Endothelial cell of umbilical vein (primary cell): ENCODE measurements at regions of chr16 and their contacts with region 1.

Region 1: GRCh38 chr16:24988593-24989338 is 26.4 kb downstream of the ARHGAP17 start:
- DNase-seq: peak; percentile 92
- H3K4me3 ChIP-seq: peak overlapping the region in 1 of 3 experiments; percentile 60
- H3K27ac ChIP-seq: peak overlapping the region; percentile 99
- H3K4me1 ChIP-seq: peaks cover 88% of the 10 kb centered on the region
- H3K27me3 ChIP-seq: no peaks in the 10 kb centered on the region
- CTCF ChIP-seq: no peak
- POLR2A ChIP-seq: no peak

Region 2: DNA sequence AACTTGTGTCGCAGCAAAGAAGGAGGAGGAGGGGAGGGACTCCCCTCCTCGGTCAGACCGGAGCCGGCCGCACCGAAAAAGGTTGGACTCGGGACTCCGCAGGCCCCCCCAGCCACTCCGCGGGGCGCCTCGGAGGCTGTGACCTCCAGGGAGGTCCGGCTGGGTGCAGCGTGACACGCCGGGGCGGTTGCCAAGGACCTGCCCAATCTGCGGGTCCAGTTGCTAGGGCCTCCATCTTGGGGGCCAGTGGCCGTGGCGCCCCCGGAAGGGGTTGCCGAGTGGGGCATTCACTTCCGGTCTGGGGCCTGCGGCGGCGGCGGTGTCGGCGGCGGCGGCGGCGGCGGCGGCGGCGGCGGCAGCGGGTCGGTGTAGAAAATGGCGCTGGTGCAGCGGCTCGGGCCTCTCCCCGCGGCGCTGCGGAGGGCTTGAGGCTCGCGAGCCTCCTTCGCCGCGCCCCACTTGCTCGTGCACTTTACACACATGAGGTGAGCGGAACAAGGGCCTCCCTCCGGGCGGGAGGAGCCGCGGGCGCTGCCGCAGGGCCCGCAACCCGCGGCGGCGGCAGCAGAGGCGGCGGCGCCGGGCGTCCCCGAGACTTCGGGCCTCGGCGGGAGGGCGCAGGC is 259.3 kb before region 1 on chr16 and contains the start of gene TNRC6A:
- CTCF ChIA-PET with region 1: no interaction called
- POLR2A ChIA-PET with region 1: no interaction called
- dilution Hi-C with region 1: no loop called
- intact Hi-C with region 1: loop called (anchors 10 kb)
- DNase-seq: peak; percentile 88
- H3K4me3 ChIP-seq: peak within 1 kb of the TSS; percentile 89 to 98 (median 96)
- H3K27ac ChIP-seq: peak within 1 kb of the TSS; percentile 82
- H3K4me1 ChIP-seq: peaks cover 22% of the 10 kb centered on the region
- H3K27me3 ChIP-seq: no peaks in the 10 kb centered on the region
- CTCF ChIP-seq: no peak
- POLR2A ChIP-seq: peak; percentile 69
- total RNA-seq, gene TNRC6A: 62.7 and 74.5 TPM in 2 replicates

Region 3: DNA sequence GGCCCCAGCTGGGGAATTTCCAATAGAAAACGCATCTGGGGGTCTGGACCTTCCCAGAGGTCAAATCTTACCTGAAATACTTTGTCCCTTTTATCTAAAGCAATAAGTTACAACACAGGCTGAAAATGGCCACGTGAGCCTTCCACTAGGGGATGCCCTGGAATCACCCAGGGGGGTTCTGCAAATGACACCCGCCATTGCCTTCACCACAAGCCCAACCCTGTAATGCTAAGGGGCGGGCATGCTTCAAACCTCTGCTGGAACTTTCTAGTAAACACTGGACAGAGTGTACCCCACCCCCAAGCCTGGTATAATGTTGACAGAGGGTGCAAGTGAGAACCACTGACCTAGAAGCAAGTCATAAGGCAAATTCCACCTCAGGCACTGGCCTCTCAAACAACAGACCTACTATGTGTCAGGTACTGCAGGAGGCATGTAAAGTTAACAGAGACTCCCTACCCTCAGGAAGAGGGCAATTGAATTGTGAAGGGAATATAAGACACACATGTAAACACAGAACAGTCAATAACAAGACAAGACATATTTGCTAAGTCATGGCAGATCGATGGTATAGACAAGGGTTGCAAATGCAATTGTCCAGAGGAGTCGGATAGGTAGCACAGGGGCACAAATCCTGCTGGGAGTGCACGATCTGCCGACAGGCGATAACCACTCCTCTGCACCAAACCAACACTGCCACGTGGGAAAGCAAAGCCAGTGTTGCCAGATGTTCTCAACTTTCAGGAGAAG is 32.6 kb before region 1 on chr16:
- CTCF ChIA-PET with region 1: no interaction called
- POLR2A ChIA-PET with region 1: no interaction called
- dilution Hi-C with region 1: no loop called
- intact Hi-C with region 1: no loop called
- DNase-seq: no peak
- H3K4me3 ChIP-seq: no peak overlapping the region
- H3K27ac ChIP-seq: no peak overlapping the region
- H3K4me1 ChIP-seq: no peaks in the 10 kb centered on the region
- H3K27me3 ChIP-seq: no peaks in the 10 kb centered on the region
- CTCF ChIP-seq: no peak
- POLR2A ChIP-seq: no peak

Region 4: GRCh38 chr16:24999856-25000461 is 11.2 kb after region 1 on chr16:
- CTCF ChIA-PET with region 1: interaction called, 15 read pairs
- POLR2A ChIA-PET with region 1: no interaction called
- dilution Hi-C with region 1: no loop called
- intact Hi-C with region 1: no loop called
- DNase-seq: no peak
- H3K4me3 ChIP-seq: no peak overlapping the region
- H3K27ac ChIP-seq: peak overlapping the region; percentile 29
- H3K4me1 ChIP-seq: peaks cover 8% of the 10 kb centered on the region
- H3K27me3 ChIP-seq: no peaks in the 10 kb centered on the region
- CTCF ChIP-seq: no peak
- POLR2A ChIP-seq: no peak

Region 5: GRCh38 chr16:25045696-25046381 is 57.1 kb after region 1 on chr16:
- CTCF ChIA-PET with region 1: interaction called, 3 read pairs
- POLR2A ChIA-PET with region 1: interaction called, 6 read pairs
- dilution Hi-C with region 1: no loop called
- intact Hi-C with region 1: loop called (anchors 1 kb)
- DNase-seq: peak; percentile 34
- H3K4me3 ChIP-seq: no peak overlapping the region
- H3K27ac ChIP-seq: no peak overlapping the region
- H3K4me1 ChIP-seq: peaks cover 27% of the 10 kb centered on the region
- H3K27me3 ChIP-seq: no peaks in the 10 kb centered on the region
- CTCF ChIP-seq: no peak
- POLR2A ChIP-seq: no peak

Region 6: DNA sequence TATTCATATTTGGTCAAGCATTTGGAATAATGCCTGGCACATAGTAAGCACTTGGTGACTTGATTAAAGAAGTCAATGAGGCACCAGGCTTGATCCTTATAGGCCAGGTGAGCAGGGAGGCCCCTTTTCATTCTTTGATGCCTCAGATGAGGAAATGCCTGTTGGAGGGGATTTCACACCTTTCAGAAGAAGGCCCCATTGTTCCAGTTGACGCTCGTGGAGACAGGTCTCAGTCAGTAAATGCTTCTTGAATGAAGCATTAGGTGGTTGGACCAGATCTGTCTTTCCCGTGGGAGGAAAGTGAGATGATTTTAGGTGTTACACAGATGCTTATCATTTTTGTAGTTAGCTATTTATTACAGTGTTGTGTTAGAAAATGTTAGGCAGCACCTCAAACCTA is 135.8 kb after region 1 on chr16:
- CTCF ChIA-PET with region 1: no interaction called
- POLR2A ChIA-PET with region 1: no interaction called
- dilution Hi-C with region 1: no loop called
- intact Hi-C with region 1: no loop called
- DNase-seq: no peak
- H3K4me3 ChIP-seq: no peak overlapping the region
- H3K27ac ChIP-seq: no peak overlapping the region
- H3K4me1 ChIP-seq: no peaks in the 10 kb centered on the region
- H3K27me3 ChIP-seq: no peaks in the 10 kb centered on the region
- CTCF ChIP-seq: no peak
- POLR2A ChIP-seq: no peak

Region 7: DNA sequence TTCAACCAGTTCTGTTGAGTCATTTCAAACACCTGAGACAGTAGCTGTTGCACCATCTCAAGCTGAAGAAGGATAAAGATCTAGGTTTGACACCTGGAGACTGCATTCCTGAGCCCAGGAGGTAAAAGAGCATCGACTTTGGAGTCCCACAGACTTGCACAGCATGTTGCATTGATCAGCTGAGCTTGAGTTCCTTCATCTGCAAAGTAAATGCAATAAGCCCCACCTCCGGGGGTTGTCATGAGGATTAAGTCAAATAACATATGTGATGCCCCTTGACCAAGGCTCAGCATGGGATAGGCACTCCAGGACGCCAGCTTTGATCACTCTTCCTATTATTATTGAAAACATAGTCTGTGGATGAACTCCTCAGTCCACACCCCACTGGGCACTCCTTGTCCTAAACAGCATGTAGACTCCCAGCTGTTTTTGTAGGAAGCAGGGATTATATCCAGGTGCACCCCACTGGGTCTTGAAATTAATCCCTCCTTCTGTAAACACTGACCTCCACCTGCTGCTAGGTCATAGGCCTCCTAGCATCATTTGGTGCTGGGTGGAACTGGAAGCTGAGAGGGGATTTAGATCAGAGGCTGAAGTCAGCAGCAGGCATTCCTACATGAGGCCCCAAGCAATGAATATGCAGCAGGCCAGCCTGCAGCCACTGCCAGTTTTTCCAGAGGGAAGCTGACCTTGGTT is 962.0 kb after region 1 on chr16:
- CTCF ChIA-PET with region 1: no interaction called
- POLR2A ChIA-PET with region 1: no interaction called
- dilution Hi-C with region 1: no loop called
- intact Hi-C with region 1: no loop called
- DNase-seq: no peak
- H3K4me3 ChIP-seq: no peak overlapping the region
- H3K27ac ChIP-seq: no peak overlapping the region
- H3K4me1 ChIP-seq: no peaks in the 10 kb centered on the region
- H3K27me3 ChIP-seq: no peaks in the 10 kb centered on the region
- CTCF ChIP-seq: no peak
- POLR2A ChIP-seq: no peak